A673 (cell line): ENCODE measurements at regions of chr12 and their contacts with region 1.

Region 1: GRCh38 chr12:71194657-71195056 is 36.9 kb upstream of the TSPAN8 start:
- DNase-seq: peak; percentile 26
- H3K4me3 ChIP-seq: no peak overlapping the region
- H3K27ac ChIP-seq: peak overlapping the region; percentile 98
- H3K4me1 ChIP-seq: peaks cover 66% of the 10 kb centered on the region
- H3K27me3 ChIP-seq: no peaks in the 10 kb centered on the region
- CTCF ChIP-seq: no peak

Region 2: GRCh38 chr12:70948976-70949336 is 245.7 kb before region 1 on chr12:
- CTCF ChIA-PET with region 1: no interaction called
- POLR2A ChIA-PET with region 1: no interaction called
- intact Hi-C with region 1: loop called (anchors 5 kb)
- DNase-seq: peak; percentile 52
- H3K4me3 ChIP-seq: no peak overlapping the region
- H3K27ac ChIP-seq: no peak overlapping the region
- H3K4me1 ChIP-seq: no peaks in the 10 kb centered on the region
- H3K27me3 ChIP-seq: no peaks in the 10 kb centered on the region
- CTCF ChIP-seq: peak; percentile 43; the same call in 1 of the 2 replicates

Region 3: GRCh38 chr12:71075743-71076142 is 118.9 kb before region 1 on chr12:
- CTCF ChIA-PET with region 1: no interaction called
- POLR2A ChIA-PET with region 1: no interaction called
- intact Hi-C with region 1: loop called (anchors 5 kb)
- DNase-seq: peak; percentile 65
- H3K4me3 ChIP-seq: no peak overlapping the region
- H3K27ac ChIP-seq: no peak overlapping the region
- H3K4me1 ChIP-seq: peaks cover 9% of the 10 kb centered on the region
- H3K27me3 ChIP-seq: no peaks in the 10 kb centered on the region
- CTCF ChIP-seq: no peak

Region 4: DNA sequence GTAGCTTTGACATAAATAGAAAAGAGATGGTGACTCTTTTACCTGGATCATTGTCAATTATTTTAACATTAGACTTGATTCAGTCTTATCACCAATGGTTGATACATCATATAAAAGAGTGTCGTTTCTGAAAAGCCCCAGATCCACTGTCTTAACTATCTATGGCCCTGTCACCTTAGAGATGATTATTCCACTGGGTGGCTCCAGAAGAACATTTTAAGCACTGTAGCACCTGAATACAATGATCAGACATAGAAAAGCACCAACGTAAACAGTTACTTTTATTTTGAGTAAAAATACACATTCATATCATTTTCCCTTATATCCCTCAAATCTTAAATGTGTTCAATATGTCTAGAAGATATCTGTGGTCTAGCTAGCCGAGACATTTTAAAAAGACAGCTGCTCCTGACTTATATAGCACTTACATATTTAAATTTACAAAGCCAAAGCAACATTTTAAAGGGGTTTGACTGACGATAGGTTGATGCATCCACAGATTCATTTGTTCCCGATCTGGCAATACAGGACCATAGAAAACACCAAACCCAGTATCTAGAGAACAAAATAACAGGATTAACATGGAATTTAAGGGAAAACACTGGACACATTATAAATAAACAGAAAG is 69.7 kb before region 1 on chr12:
- CTCF ChIA-PET with region 1: no interaction called
- POLR2A ChIA-PET with region 1: no interaction called
- intact Hi-C with region 1: loop called (anchors 2 kb)
- DNase-seq: no peak
- H3K4me3 ChIP-seq: no peak overlapping the region
- H3K27ac ChIP-seq: peak overlapping the region; percentile 76
- H3K4me1 ChIP-seq: peaks cover 49% of the 10 kb centered on the region
- H3K27me3 ChIP-seq: no peaks in the 10 kb centered on the region
- CTCF ChIP-seq: 0 out of 2 replicates have a peak, but pooled peaks have one; percentile 22

Region 5: DNA sequence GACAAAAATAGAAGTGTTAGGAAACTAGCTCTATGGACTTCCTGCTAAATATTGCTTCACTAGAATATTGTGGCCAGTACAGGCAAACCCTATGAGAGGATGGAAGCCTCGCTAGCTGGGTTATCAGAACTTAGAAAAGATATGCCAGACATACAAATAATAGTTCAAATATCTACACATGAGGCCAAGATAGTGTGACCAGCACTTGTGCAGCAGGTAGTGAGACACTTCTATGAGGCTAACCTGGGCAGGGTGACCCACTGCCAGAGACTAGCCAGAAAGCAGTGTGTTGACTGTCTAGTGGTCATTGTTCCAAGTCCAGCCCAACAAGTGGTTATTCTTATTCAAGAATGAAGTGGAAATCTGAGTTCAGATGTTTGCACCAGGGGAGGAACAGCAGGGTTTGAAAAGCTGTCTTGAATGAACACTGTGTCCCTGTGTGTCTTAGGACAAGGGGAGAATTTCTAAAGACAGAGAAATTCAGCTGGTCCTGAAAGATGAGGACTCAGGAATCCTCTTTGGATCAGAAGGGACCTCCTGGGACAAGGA is 53.2 kb before region 1 on chr12:
- CTCF ChIA-PET with region 1: no interaction called
- POLR2A ChIA-PET with region 1: no interaction called
- intact Hi-C with region 1: loop called (anchors 5 kb)
- DNase-seq: no peak
- H3K4me3 ChIP-seq: no peak overlapping the region
- H3K27ac ChIP-seq: peak overlapping the region; percentile 66
- H3K4me1 ChIP-seq: peaks cover 65% of the 10 kb centered on the region
- H3K27me3 ChIP-seq: no peaks in the 10 kb centered on the region
- CTCF ChIP-seq: no peak

Region 6: DNA sequence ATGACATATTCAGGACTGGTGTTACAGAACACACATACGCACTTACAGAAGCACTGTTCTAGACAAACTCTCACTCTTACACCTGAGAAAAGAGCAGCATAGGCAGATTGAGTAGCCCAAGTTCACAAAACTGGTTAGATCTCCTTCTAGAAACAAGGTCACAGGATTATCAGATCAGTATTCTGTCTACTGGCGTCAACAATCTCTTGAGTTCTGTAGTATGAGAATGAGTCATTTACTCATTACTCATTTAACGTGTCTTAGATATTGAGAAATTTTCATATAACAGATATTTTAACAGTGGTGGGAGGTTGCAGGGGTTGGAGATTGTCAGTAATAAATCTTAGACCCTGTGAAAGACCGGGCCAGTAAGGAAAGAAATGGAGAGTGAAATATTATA is 34.1 kb before region 1 on chr12:
- CTCF ChIA-PET with region 1: no interaction called
- POLR2A ChIA-PET with region 1: no interaction called
- intact Hi-C with region 1: loop called (anchors 2 kb)
- DNase-seq: no peak
- H3K4me3 ChIP-seq: no peak overlapping the region
- H3K27ac ChIP-seq: peak overlapping the region; percentile 15
- H3K4me1 ChIP-seq: peaks cover 33% of the 10 kb centered on the region
- H3K27me3 ChIP-seq: no peaks in the 10 kb centered on the region
- CTCF ChIP-seq: no peak

Region 7: GRCh38 chr12:71876137-71876799 is 681.6 kb after region 1 on chr12:
- CTCF ChIA-PET with region 1: no interaction called
- POLR2A ChIA-PET with region 1: interaction called, 14 read pairs
- intact Hi-C with region 1: loop called (anchors 2 kb)
- DNase-seq: peak; percentile 65
- H3K4me3 ChIP-seq: no peak overlapping the region
- H3K27ac ChIP-seq: peak overlapping the region; percentile 99
- H3K4me1 ChIP-seq: peaks cover 91% of the 10 kb centered on the region
- H3K27me3 ChIP-seq: no peaks in the 10 kb centered on the region
- CTCF ChIP-seq: no peak